CD8-positive, alpha-beta T cell (primary cell): ENCODE measurements at regions of chr19 and their contacts with region 1.

Region 1: GRCh38 chr19:12847159-12848139 is 9.1 kb downstream of the MAST1 start:
- DNase-seq: peak; percentile 66 to 90 (median 83)
- ATAC-seq: peak; percentile 96
- H3K4me3 ChIP-seq: peak overlapping the region; percentile 20 to 25
- H3K4me3 Mint-ChIP-seq: peak overlapping the region; percentile 22
- H3K27ac ChIP-seq: no peak overlapping the region
- H3K27ac Mint-ChIP-seq: no peak overlapping the region
- H3K4me1 ChIP-seq: peaks cover 4% of the 10 kb centered on the region
- H3K4me1 Mint-ChIP-seq: peaks cover 3% of the 10 kb centered on the region
- H3K27me3 ChIP-seq: peaks cover 0 to 9% of the 10 kb centered on the region in 2 experiments
- H3K27me3 Mint-ChIP-seq: peaks cover 37% of the 10 kb centered on the region
- CTCF ChIP-seq: peak; percentile 99

Region 2: GRCh38 chr19:12716861-12717260 is 130.6 kb before region 1 on chr19:
- CTCF ChIA-PET with region 1: interaction called, 35 read pairs
- POLR2A ChIA-PET with region 1: no interaction called
- intact Hi-C with region 1: loop called (anchors 1 kb)
- DNase-seq: peak in 4 of 9 experiments; percentile 36 to 74 (median 62)
- ATAC-seq: peak; percentile 79
- H3K4me3 ChIP-seq: no peak overlapping the region
- H3K4me3 Mint-ChIP-seq: no peak overlapping the region
- H3K27ac ChIP-seq: no peak overlapping the region
- H3K27ac Mint-ChIP-seq: no peak overlapping the region
- H3K4me1 ChIP-seq: peaks cover 16% of the 10 kb centered on the region
- H3K4me1 Mint-ChIP-seq: peaks cover 22% of the 10 kb centered on the region
- H3K27me3 ChIP-seq: no peaks in the 10 kb centered on the region
- H3K27me3 Mint-ChIP-seq: no peaks in the 10 kb centered on the region
- CTCF ChIP-seq: no peak

Region 3: DNA sequence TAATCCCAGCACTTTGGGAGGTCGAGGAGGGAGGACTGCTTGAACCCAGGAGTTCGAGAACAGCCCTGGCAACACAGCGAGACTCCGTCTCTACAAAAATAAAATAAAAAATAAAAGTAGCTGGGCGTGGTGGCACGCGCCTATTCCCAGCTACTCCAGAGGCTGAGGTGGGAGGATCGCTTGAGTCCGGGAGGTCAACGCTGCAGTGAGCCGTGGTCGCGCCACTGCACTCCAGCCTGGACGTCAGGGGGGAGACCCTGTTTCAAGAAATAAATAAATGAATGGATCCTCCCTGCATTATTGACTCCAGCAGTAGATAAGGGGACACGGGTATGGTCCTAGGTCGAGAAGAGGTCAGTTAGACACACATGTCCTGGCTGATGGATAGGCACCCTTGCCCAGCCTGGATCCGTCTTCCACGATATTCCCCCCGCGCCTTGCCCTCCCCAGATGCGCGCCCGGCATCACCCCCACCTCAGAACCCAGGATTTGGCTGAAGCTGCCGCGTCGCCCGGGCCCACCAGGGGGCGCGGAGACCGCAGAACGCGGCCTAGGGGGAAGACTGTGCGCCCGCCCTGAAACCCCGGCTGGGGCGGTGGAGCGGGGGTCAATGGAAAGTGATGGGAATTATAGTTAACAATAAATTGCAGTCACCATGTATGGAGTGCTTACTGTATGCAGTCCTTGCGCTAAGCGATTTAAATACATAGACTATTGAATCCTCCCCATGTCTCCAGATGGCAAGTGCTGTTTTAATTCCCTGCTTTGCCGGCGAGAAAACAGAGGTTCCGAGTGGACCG is 70.0 kb before region 1 on chr19:
- CTCF ChIA-PET with region 1: interaction called, 28 read pairs
- POLR2A ChIA-PET with region 1: no interaction called
- intact Hi-C with region 1: loop called in 1 of 2 experiments (anchors 5 kb)
- DNase-seq: peak; percentile 68 to 89 (median 80)
- ATAC-seq: peak; percentile 4
- H3K4me3 ChIP-seq: peak overlapping the region; percentile 63 to 86
- H3K4me3 Mint-ChIP-seq: peak overlapping the region; percentile 82
- H3K27ac ChIP-seq: peak overlapping the region; percentile 57 to 87
- H3K27ac Mint-ChIP-seq: peak overlapping the region; percentile 85
- H3K4me1 ChIP-seq: peaks cover 38% of the 10 kb centered on the region
- H3K4me1 Mint-ChIP-seq: peaks cover 36% of the 10 kb centered on the region
- H3K27me3 ChIP-seq: no peaks in the 10 kb centered on the region
- H3K27me3 Mint-ChIP-seq: no peaks in the 10 kb centered on the region
- CTCF ChIP-seq: peak; percentile 97

Region 4: DNA sequence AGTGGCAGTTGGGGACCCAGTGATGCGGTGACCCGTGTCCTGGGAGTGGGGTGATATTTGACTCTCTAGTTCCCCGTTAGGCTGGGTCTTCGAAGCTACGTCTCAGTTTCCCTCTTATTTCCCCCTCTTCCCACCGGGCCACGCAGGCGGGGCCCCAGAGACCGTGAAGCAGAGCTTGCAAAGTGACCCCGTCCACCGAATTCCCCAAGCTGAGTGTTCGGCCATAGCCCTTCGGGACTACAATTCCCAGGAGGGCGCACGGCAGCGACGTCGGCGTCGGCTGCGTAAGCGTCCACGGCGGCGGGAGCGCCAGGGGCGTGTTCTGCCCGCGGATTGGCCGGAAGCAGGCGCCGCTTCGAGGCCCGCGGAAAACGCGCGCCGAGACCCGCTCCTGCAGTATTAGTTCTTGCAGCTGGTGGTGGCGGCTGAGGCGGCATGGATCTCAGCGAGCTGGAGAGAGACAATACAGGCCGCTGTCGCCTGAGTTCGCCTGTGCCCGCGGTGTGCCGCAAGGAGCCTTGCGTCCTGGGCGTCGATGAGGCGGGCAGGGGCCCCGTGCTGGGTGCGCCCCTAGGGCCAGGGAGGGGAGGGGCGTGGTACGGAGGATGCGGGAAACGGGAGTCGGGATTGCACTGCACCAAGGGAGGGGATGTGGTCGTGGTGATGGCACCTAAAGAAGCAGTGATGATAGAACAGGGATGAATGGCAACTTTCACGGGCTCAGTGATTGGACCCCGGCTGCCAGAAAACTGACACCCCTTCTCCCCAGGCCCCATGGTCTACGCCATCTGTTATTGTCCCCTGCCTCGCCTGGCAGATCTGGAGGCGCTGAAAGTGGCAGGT is 41.0 kb before region 1 on chr19 and contains the start of gene RNASEH2A:
- CTCF ChIA-PET with region 1: interaction called, 15 read pairs
- POLR2A ChIA-PET with region 1: interaction called, 3 read pairs
- intact Hi-C with region 1: no loop called
- DNase-seq: peak; percentile 66 to 93 (median 85)
- ATAC-seq: peak; percentile 92
- H3K4me3 ChIP-seq: peak within 1 kb of the TSS; percentile 60 to 68
- H3K4me3 Mint-ChIP-seq: peak within 1 kb of the TSS; percentile 92
- H3K27ac ChIP-seq: peak within 1 kb of the TSS; percentile 54 to 63
- H3K27ac Mint-ChIP-seq: peak within 1 kb of the TSS; percentile 78
- H3K4me1 ChIP-seq: peaks cover 18% of the 10 kb centered on the region
- H3K4me1 Mint-ChIP-seq: peaks cover 26% of the 10 kb centered on the region
- H3K27me3 ChIP-seq: no peaks in the 10 kb centered on the region
- H3K27me3 Mint-ChIP-seq: no peaks in the 10 kb centered on the region
- CTCF ChIP-seq: no peak
- total RNA-seq, gene RNASEH2A: 1.3 to 2.2 TPM

Region 5: GRCh38 chr19:12825254-12826131 is 22.0 kb before region 1 on chr19:
- CTCF ChIA-PET with region 1: interaction called, 14 read pairs
- POLR2A ChIA-PET with region 1: no interaction called
- intact Hi-C with region 1: no loop called
- DNase-seq: peak in 3 of 9 experiments; percentile 20 to 39 (median 30)
- ATAC-seq: no peak
- H3K4me3 ChIP-seq: no peak overlapping the region
- H3K4me3 Mint-ChIP-seq: no peak overlapping the region
- H3K27ac ChIP-seq: no peak overlapping the region
- H3K27ac Mint-ChIP-seq: no peak overlapping the region
- H3K4me1 ChIP-seq: peaks cover 9% of the 10 kb centered on the region
- H3K4me1 Mint-ChIP-seq: peaks cover 4% of the 10 kb centered on the region
- H3K27me3 ChIP-seq: peaks cover 10 to 43% of the 10 kb centered on the region in 2 experiments
- H3K27me3 Mint-ChIP-seq: peaks cover 43% of the 10 kb centered on the region
- CTCF ChIP-seq: peak; percentile 28

Region 6: GRCh38 chr19:12933287-12934072 is 86.0 kb after region 1 on chr19 and contains the start of gene FARSA:
- CTCF ChIA-PET with region 1: no interaction called
- POLR2A ChIA-PET with region 1: no interaction called
- intact Hi-C with region 1: no loop called
- DNase-seq: peak; percentile 71 to 94 (median 87)
- ATAC-seq: peak; percentile 50
- H3K4me3 ChIP-seq: peak within 1 kb of the TSS; percentile 93
- H3K4me3 Mint-ChIP-seq: peak within 1 kb of the TSS; percentile 99
- H3K27ac ChIP-seq: peak within 1 kb of the TSS; percentile 66 to 68
- H3K27ac Mint-ChIP-seq: peak within 1 kb of the TSS; percentile 93
- H3K4me1 ChIP-seq: peaks cover 39% of the 10 kb centered on the region
- H3K4me1 Mint-ChIP-seq: peaks cover 41% of the 10 kb centered on the region
- H3K27me3 ChIP-seq: no peaks in the 10 kb centered on the region
- H3K27me3 Mint-ChIP-seq: no peaks in the 10 kb centered on the region
- CTCF ChIP-seq: no peak
- total RNA-seq, gene FARSA: 17.4 to 17.5 TPM